ENCODE measurements at regions of chr1 and their contacts with region 1.

Region 1: GRCh38 chr1:226062558-226063223 is at the start of gene H3-3A:
- DNase-seq: peak; percentile 63

Region 2: DNA sequence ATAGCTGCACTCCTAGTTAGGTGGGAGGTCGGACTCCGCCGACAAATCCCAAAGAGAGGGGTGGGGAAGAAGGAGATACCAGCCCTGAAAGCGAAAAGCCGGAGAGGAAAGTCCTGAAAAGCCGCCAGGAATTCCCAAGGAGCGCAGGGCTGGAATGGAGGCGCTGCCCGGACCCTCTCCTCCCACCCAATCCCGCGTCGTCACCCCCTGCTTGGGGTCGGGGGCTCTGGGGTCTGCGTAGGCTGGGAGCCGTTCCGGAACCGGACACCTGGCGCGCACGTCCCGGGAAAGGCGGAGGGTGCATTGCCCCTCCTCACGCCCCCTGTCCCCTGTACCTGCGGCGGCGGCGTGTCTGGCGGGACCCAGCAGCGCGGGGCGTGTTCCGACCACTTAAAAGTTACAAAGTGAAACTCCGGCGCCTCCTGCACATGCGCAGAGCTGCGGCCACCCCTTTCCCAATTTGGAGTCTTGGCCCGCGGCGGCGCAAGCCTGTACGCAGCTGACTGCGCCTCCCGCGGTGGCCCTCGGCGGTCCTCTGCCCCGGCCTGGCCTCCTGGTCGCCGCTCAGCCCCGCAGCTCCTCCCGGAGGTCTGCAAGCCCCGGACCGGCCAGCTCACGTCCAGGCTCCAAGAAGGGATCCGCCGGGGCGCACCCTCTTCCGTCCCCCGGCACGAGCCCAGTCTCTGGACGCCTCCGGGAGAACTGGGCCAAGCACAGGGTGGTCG is 180.6 kb before region 1 on chr1 and contains the start of gene TMEM63A:
- CTCF ChIA-PET with region 1: no interaction called
- POLR2A ChIA-PET with region 1: interaction called, 11 read pairs
- DNase-seq: peak; percentile 98

Region 3: DNA sequence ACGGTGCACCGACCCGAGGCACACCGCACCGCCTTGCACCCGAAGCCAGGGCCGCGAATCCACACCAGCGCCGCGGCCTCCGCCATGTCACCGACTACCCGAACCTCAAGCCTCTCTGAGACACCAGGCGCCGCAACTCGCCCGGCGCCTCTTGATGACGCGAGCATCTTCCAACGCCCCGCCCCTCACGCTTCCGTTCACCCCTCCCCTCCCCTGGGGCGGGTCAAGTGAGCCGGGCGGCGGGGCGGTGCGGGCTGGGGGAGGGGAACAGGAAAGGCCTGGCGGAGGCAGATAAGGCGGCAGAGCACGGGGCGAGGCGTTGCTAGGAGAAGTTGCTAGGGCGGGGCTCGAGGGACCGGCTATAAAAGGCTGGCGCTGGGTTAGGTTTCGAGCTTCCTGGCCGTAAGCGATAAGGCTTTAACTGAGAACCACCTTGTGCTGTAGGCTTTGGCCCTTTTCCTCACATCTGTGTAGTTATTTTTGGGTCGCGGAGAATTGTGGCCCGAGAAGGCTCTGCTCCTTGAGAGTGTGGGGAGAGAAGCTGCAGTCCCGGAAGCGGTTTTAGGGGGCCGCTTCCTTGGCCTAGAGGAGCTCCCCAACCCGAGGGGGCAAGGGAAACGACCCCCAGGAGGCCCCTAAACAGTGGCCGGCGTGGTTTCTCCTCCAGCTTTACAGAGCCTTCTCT is 63.3 kb before region 1 on chr1 and contains the start of gene SDE2:
- CTCF ChIA-PET with region 1: interaction called, 4 read pairs
- POLR2A ChIA-PET with region 1: interaction called, 61 read pairs
- DNase-seq: peak; percentile 100

Region 4: DNA sequence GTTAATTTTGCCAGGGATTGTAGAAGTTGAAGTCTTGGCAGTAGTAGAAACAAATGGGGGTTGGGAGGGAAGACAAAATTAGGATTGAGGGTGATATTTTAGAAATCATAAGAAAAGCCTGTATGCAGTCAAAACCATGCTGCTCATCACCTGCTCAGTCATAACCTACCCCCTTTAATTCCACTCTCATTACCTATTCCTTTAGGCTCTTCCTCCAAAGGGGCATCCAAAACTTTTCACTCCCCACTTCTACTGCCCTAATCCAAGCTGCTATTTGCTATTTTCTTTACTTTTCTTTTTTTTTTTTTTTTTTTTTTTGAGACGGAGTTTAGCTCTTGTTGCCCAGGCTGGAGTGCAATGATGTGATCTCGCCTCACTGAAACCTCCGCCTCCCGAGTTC is 11.4 kb after region 1 on chr1:
- CTCF ChIA-PET with region 1: interaction called, 11 read pairs
- POLR2A ChIA-PET with region 1: interaction called, 32 read pairs
- DNase-seq: no peak

Region 5: GRCh38 chr1:226100436-226101391 is 38.0 kb after region 1 on chr1:
- CTCF ChIA-PET with region 1: interaction called, 13 read pairs
- POLR2A ChIA-PET with region 1: interaction called, 5 read pairs
- DNase-seq: peak; percentile 83

Region 6: DNA sequence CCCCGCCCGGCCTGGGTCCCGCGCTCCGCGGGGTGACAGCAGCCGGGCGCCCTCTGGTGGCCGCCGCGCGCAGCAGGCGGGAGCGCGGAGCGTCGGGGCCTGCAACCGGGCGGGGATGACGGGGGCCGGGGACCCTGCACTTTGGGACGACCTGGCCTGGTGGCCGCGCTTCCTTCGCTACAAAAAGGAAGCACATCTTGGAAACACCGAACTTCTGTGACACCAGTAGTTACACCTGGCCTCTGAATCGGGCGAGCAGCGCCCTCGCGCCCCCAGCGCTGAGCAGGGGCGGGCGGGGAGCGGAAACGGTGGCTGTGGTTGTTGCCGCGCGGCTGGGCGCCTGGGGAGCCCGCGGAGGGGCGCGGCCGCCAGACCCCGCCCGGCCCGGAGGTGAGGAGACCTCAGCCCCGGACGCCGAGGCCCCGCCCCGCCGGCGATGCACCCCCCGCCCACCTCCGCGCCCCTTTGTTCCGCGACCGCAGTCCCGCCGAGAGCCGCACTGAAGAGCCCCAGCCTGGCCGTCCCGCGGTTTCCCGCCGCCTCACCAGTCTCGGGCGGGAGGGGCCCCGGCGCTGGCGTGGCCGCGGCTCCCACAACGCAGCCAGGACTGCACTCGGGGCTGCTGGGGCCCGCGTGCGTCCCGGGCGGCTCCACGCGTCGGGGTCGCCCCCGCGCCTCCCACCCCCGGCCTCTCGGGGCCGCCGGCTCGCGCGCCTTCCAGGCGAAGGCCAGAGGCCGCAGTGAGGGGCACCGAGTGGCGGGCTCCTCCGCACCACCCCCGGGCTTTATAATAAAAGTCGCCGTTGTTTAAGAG is 59.1 kb after region 1 on chr1:
- CTCF ChIA-PET with region 1: interaction called, 24 read pairs
- POLR2A ChIA-PET with region 1: interaction called, 49 read pairs
- DNase-seq: peak; percentile 94

Region 7: DNA sequence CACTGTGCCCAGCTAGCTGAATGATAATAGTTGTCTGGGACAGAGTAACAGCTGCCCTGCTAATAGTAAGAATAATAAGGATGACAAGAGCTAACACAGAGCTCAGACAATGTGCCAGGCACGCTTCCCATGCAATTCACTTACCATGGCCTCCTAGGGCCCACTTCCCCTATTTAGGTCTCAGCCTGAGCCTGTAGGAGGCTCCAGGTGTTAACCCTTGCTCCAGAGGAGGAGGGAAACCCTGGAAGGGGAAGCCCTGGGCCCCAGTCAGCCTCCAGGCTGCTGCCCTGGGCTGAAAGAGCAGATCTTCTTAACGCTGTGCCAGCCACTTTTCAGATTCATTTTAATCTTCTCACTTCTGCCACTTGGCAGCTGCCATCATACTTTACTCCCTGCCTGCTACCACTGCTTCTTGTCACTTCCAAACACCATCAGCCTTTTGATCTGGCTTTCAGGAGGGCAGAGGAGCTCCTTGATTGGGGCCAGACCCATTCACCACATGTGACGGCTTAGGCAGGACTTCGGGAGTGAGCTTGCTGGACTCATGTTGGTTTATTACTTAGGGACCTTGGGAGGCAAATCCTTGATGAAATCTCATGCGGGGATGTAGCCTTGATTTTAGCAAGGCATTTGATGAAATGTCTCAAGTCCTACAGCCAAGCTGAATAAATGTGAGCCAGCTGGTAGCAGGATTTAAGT is 411.9 kb after region 1 on chr1:
- CTCF ChIA-PET with region 1: no interaction called
- POLR2A ChIA-PET with region 1: no interaction called
- DNase-seq: no peak